ENCODE measurements at regions of chr16 and their contacts with region 1.

Region 1: GRCh38 chr16:74309789-74310781 is 13.5 kb downstream of the PSMD7 start:
- DNase-seq: peak; percentile 55
- H3K4me3 ChIP-seq: no peak overlapping the region
- H3K27ac ChIP-seq: no peak overlapping the region
- H3K4me1 ChIP-seq: no peaks in the 10 kb centered on the region
- CTCF ChIP-seq: peak; percentile 93

Region 2: GRCh38 chr16:74224828-74225612 is 85.1 kb before region 1 on chr16:
- CTCF ChIA-PET with region 1: no interaction called
- POLR2A ChIA-PET with region 1: no interaction called
- intact Hi-C with region 1: no loop called
- DNase-seq: no peak
- H3K4me3 ChIP-seq: no peak overlapping the region
- H3K27ac ChIP-seq: no peak overlapping the region
- H3K4me1 ChIP-seq: no peaks in the 10 kb centered on the region
- CTCF ChIP-seq: no peak

Region 3: GRCh38 chr16:74296432-74297144 is 13.5 kb before region 1 on chr16 and contains the start of gene PSMD7:
- CTCF ChIA-PET with region 1: no interaction called
- POLR2A ChIA-PET with region 1: interaction called, 15 read pairs
- intact Hi-C with region 1: no loop called
- DNase-seq: peak; percentile 90
- H3K4me3 ChIP-seq: peak within 1 kb of the TSS; percentile 92
- H3K27ac ChIP-seq: peak within 1 kb of the TSS; percentile 82
- H3K4me1 ChIP-seq: peaks cover 30% of the 10 kb centered on the region
- CTCF ChIP-seq: no peak
- total RNA-seq, gene PSMD7: 66.3 and 80.6 TPM in 2 replicates

Region 4: GRCh38 chr16:74431516-74431915 is 121.4 kb after region 1 on chr16:
- CTCF ChIA-PET with region 1: no interaction called
- POLR2A ChIA-PET with region 1: no interaction called
- intact Hi-C with region 1: loop called (anchors 5 kb)
- DNase-seq: no peak
- H3K4me3 ChIP-seq: no peak overlapping the region
- H3K27ac ChIP-seq: no peak overlapping the region
- H3K4me1 ChIP-seq: no peaks in the 10 kb centered on the region
- CTCF ChIP-seq: no peak